ENCODE measurements at regions of chr14 and their contacts with region 1.

Region 1: DNA sequence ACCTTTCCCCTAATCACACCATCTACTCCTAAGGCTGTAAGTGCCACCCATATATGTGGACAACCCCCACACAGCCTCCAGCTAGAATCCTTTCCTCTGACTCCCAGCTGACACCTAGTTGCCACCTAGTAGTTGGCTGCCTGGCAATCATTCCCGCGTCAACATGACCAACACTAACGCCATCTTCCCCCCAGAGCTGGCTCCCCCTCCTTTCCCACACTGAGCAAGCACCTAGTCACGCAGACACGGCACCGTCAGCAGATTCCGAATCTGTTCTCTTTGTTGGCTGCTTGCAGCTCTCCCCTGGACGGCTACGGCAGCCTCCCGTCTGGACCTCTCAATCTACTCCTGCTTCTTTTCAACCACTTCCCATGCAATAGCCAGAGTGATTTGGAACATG is 27.7 kb downstream of the UBR7 start:
- DNase-seq: no peak
- ATAC-seq: no peak
- H3K4me3 Mint-ChIP-seq: no peak overlapping the region
- H3K27ac Mint-ChIP-seq: no peak overlapping the region
- H3K4me1 Mint-ChIP-seq: peaks cover 10% of the 10 kb centered on the region
- H3K27me3 Mint-ChIP-seq: no peaks in the 10 kb centered on the region
- CTCF ChIP-seq: no peak

Region 2: GRCh38 chr14:93533472-93534241 is 298.9 kb after region 1 on chr14:
- CTCF ChIA-PET with region 1: interaction called, 3 read pairs
- POLR2A ChIA-PET with region 1: no interaction called
- intact Hi-C with region 1: loop called (anchors 1 kb)
- DNase-seq: no peak
- ATAC-seq: peak; percentile 79
- H3K4me3 Mint-ChIP-seq: peak overlapping the region; percentile 15
- H3K27ac Mint-ChIP-seq: no peak overlapping the region
- H3K4me1 Mint-ChIP-seq: peaks cover 30% of the 10 kb centered on the region
- H3K27me3 Mint-ChIP-seq: no peaks in the 10 kb centered on the region
- CTCF ChIP-seq: no peak

Region 3: DNA sequence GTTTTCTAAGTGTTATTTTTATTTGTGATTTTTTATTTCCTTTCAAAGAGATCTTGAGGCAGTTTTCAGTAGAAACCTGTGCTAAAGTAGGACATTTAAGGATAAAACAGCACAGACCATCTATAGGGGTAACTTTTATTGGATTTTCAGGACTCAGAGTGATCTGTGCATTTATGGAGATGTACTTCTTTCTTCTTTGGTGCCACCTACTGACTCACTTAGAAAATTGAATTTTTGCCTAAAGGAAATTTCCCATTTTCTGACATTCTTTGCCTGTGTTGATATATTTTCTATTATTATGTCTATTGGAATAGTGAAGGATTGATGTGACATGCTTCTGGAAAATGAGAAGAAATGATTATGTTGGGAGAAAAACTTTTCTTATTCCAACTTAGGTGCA is 309.0 kb after region 1 on chr14:
- CTCF ChIA-PET with region 1: interaction called, 4 read pairs
- POLR2A ChIA-PET with region 1: no interaction called
- intact Hi-C with region 1: loop called (anchors 2 kb)
- DNase-seq: no peak
- ATAC-seq: no peak
- H3K4me3 Mint-ChIP-seq: no peak overlapping the region
- H3K27ac Mint-ChIP-seq: no peak overlapping the region
- H3K4me1 Mint-ChIP-seq: peaks cover 9% of the 10 kb centered on the region
- H3K27me3 Mint-ChIP-seq: peaks cover 6% of the 10 kb centered on the region
- CTCF ChIP-seq: no peak

Region 4: DNA sequence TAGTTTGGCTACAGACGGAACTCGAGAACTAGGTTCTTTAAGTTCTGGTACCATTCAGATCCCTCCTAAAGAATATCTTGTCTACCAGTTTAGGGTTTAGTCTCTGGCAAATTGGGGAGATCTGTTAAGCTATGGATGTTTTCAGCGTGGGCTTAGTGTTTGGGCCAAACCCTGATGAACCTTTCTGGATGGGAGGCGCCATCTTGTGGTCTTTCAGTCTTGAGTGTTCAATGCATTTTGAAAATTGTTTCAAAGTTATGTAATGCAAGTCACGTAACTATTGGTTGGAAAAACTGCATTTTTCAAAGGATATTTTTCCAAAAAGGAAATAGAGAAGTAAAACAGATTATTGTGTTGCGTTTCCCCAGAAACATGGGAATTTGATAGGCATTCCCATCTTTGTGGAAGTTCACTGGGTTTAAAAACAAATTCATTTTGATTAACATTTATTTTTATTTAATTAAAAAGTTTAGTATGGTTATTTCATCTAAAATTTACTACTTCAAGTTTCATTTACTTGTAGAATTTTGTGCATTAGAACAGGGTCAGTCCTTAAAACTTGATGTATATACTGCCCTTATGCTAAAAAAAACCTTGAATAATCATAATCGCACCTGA is 384.5 kb after region 1 on chr14:
- CTCF ChIA-PET with region 1: interaction called, 6 read pairs
- POLR2A ChIA-PET with region 1: no interaction called
- intact Hi-C with region 1: loop called (anchors 1 kb)
- DNase-seq: no peak
- ATAC-seq: no peak
- H3K4me3 Mint-ChIP-seq: no peak overlapping the region
- H3K27ac Mint-ChIP-seq: no peak overlapping the region
- H3K4me1 Mint-ChIP-seq: no peaks in the 10 kb centered on the region
- H3K27me3 Mint-ChIP-seq: peaks cover 4% of the 10 kb centered on the region
- CTCF ChIP-seq: peak; percentile 46

Measured in activated B cell treated with CpG ODN at 0.5 μM for 24 hours (primary cell).